Spleen (tissue), 13 donors: ENCODE measurements at regions of chr16 and their contacts with region 1.

Region 1: DNA sequence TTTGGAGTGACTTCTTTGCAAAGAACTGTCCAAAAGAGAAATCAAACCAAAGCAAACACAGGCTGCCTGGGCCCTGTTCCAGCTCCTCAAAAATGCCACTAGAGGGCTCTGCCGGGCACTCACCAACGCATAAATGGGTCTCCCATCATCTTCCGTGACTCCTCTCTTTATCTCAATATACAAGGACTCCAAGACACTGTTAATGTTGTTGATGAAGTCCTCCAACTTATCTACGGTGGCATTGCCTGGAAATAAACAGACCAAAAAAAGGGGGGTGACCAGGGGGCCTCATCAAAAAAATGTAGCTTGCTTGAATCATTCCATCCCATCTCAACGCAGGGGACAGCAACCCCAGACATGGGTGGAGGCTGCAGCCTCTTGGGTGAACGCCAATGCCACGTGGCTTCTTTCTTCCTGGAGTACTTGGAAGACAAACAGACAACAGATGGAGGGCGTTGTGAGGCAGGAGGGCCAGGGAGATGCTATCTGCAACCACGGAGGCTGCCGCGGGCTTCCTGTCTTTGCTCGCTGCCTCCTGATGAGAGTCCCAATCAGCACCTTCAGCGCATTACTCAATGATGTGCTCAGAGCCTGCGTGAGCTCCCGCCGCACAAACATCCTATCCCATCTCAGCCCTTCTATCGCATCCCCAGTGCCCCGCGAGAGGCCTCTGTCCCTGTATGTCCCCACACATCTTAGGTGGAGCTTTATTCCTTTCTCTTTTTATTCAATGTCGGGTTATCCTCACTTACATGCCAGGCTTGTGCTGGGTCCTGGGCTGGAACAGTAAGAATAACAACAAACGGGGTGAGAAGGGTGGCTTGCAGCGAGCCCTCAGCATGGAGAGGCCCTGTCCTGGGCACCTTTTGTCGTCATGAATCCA is 32.0 kb downstream of the KDM8 start:
- DNase-seq: peak; percentile 92
- H3K4me3 ChIP-seq: peak overlapping the region in 5 of 8 donors; percentile 9 to 53 (median 15)
- H3K27ac ChIP-seq: peak overlapping the region; percentile 79 to 94 (median 89)
- H3K4me1 ChIP-seq: peaks cover 65 to 100% (median 91%) of the 10 kb centered on the region in 6 donors
- H3K27me3 ChIP-seq: no peaks in the 10 kb centered on the region
- CTCF ChIP-seq: peak; percentile 63 to 93 (median 87)
- POLR2A ChIP-seq: no peak

Region 2: GRCh38 chr16:27145630-27146029 is 89.7 kb before region 1 on chr16:
- intact Hi-C with region 1: no loop called
- DNase-seq: no peak
- H3K4me3 ChIP-seq: no peak overlapping the region
- H3K27ac ChIP-seq: no peak overlapping the region
- H3K4me1 ChIP-seq: no peaks in the 10 kb centered on the region
- H3K27me3 ChIP-seq: peaks cover 0 to 29% (median 0%) of the 10 kb centered on the region in 7 donors
- CTCF ChIP-seq: no peak
- POLR2A ChIP-seq: no peak

Region 3: DNA sequence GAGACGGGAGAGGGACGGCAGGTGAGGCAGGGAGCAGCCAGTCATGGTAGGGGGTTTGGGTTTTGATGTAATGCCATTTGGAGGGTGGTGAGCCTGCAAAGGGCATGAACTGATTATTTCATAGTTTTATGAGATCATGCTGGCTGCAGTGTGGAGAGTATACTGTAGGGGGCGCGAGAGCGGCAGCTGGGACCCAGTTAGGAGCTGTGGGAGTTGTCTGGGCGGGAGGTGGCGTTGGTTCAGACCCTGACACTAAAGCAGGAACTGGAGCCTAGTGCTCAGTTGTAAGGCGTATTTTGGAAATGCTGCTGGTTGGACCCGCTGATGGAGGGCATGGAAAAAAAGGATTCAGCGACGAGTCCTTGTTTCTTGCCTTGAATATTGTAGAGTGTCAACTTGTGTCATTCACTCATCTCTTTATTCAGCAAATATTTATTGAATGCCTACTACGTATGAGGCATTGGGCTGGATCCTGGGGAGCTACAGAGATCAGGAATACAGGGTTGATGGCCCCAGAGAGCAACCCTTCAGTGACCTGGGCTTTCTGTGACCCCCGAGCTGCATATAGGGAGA is 55.7 kb before region 1 on chr16:
- intact Hi-C with region 1: loop called (anchors 10 kb)
- DNase-seq: peak; percentile 94
- H3K4me3 ChIP-seq: no peak overlapping the region
- H3K27ac ChIP-seq: peak overlapping the region in 1 of 8 donors; percentile 22
- H3K4me1 ChIP-seq: peaks cover 9 to 22% (median 12%) of the 10 kb centered on the region in 6 donors
- H3K27me3 ChIP-seq: no peaks in the 10 kb centered on the region
- CTCF ChIP-seq: peak; percentile 89 to 99 (median 95)
- POLR2A ChIP-seq: no peak

Region 4: DNA sequence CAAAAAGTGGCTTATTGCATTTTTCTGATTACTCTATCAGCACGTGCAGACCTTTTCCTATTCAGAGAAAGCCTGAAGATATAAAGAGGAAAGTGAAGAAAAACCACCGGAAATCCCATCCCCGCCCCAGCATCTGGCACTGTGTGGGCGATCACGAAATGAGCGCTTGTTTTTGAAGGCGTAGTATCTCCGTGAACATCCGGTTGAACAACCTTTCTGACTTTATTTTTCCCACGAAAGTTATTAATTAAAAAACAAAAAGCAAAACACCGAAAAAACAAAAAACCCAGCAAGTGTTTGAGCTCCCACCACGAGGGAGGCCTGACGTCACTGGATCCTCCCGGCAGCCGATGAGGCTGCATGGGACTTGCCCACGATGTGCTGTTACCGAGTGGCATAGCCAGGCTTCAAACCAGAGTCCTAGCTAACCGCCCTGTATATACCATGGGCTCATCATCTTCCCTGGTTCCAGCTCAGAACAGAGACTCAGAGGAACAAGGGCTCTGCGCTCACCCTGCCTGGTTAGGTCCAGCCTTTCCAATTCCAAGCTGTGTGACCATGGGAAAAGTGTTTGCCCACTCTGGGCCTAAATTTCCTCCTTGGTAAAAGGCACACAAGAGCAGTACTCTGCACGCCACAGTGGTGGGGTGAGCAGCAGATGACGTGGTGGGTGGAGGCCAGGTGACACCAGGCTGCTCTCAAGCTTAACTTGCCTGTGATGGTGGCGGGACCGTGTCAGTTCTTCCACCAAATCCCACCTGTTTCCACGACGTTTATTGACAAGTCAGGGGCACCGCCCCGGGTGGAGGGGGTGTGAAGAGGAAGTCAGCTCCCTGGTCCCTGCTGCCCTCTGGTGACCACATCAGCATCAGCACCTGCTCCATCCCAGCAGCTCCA is 132.4 kb after region 1 on chr16:
- intact Hi-C with region 1: loop called (anchors 2 kb)
- DNase-seq: peak; percentile 96
- H3K4me3 ChIP-seq: peak overlapping the region in 6 of 8 donors; percentile 9 to 50 (median 20)
- H3K27ac ChIP-seq: peak overlapping the region; percentile 81 to 92 (median 88)
- H3K4me1 ChIP-seq: peaks cover 27 to 71% (median 31%) of the 10 kb centered on the region in 6 donors
- H3K27me3 ChIP-seq: no peaks in the 10 kb centered on the region
- CTCF ChIP-seq: peak; percentile 57 to 91 (median 85)
- POLR2A ChIP-seq: no peak

Region 5: DNA sequence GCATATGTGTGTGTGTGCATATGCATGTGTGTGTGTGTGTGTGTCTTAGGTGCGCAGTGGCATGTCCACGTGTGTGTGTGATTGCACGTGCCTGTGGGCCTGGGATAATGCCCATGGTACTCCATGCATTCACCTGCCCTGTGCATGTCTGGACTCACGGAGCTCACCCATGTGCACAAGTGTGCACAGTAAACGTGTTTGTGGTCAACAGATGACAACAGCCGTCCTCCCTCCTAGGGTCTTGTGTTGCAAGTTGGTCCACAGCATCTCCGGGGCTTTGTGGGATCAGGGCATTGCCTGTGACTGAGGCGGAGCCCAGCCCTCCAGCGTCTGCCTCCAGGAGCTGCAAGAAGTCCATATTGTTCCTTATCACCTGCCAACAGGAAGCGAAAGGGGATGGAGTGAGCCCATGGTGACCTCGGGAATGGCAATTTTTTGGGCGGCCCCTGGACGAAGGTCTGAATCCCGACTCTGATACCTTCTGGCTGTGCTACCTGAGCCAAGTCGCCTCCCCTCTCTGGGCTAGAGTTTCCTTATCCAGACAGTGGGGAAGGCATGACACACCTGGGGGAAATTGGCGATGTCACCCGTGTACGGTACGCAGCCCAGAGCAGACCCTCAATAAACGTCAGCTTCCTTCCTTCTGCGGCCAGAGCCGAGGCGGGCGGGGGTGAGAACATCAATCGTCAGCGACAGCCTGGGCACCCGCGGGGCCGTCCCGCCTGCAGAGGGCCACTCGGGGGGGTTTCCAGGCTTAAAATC is 214.3 kb after region 1 on chr16:
- intact Hi-C with region 1: loop called (anchors 10 kb)
- DNase-seq: peak; percentile 90
- H3K4me3 ChIP-seq: peak overlapping the region in 1 of 8 donors; percentile 46
- H3K27ac ChIP-seq: peak overlapping the region in 6 of 8 donors; percentile 36 to 86 (median 63)
- H3K4me1 ChIP-seq: peaks cover 15 to 69% (median 48%) of the 10 kb centered on the region in 6 donors
- H3K27me3 ChIP-seq: peaks cover 0 to 32% (median 10%) of the 10 kb centered on the region in 7 donors
- CTCF ChIP-seq: no peak
- POLR2A ChIP-seq: no peak